BJ (cell line): ENCODE measurements at regions of chr1 and their contacts with region 1.

Region 1: GRCh38 chr1:115771847-115772457 is 3.4 kb upstream of the CASQ2 start:
- DNase-seq: peak; percentile 37
- H3K4me3 ChIP-seq: no peak overlapping the region
- H3K27me3 ChIP-seq: peaks cover 4% of the 10 kb centered on the region
- CTCF ChIP-seq: peak; percentile 75

Region 2: DNA sequence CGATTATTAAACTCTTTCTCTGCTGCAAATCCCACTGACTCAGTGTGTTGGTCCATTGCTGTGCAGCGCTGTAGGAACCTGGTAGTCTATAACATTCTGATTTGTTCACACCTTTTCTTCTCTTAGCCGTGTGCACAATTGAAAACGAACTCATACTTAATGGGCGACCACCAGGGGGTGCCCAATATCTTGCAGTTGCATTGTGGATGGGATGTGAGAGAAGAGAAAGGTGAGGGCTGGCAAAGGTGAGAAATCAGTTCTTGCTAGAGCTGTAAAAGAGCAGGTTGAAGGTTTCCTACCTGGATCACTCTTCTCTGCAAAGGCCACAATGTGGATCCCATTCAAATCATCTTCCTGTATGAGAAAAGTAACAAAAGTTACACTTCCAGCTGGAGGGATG is 54.4 kb before region 1 on chr1:
- CTCF ChIA-PET with region 1: interaction called, 113 read pairs
- POLR2A ChIA-PET with region 1: no interaction called
- DNase-seq: no peak
- H3K4me3 ChIP-seq: no peak overlapping the region
- H3K27me3 ChIP-seq: peaks cover 9% of the 10 kb centered on the region; the same call in 1 of the 2 replicates
- CTCF ChIP-seq: peak; percentile 53

Region 3: DNA sequence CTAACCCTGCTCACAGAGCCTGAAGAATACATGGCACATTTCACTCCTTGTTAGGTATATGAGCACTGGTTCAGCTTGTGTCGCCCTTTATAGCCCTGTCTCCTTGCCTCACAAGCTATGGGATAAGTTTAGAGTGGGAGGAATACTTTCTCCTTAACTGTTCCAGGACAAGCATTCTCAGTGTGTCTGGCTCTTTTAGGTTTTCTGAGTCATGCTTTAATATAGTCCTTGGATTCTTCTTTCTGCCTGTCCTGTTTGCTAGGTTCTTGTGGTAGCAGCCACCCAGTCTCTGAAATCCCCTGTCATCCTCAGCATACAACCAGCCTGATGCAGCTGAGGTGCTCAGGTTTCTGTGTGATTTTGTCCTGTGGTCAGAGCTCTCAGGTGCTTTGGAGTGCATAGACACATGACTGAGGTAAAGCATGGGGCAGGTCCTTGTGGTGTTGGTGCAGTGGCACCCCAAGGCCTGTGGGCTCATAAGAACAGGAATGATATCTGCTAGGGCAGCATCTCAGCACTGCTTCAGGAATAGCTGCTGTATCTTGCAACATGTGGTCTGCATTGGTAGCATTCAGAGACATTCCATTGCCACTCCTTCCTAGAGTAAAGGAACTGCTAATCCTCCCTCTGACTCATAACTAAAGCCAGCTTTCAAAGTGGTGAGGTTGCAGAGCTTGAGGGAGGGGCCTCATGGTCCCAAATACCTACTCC is 10.8 kb after region 1 on chr1:
- CTCF ChIA-PET with region 1: interaction called, 15 read pairs
- POLR2A ChIA-PET with region 1: no interaction called
- DNase-seq: peak; percentile 53
- H3K4me3 ChIP-seq: no peak overlapping the region
- H3K27me3 ChIP-seq: no peaks in the 10 kb centered on the region
- CTCF ChIP-seq: no peak